ENCODE measurements at regions of chr1 and their contacts with region 1.

Region 1: DNA sequence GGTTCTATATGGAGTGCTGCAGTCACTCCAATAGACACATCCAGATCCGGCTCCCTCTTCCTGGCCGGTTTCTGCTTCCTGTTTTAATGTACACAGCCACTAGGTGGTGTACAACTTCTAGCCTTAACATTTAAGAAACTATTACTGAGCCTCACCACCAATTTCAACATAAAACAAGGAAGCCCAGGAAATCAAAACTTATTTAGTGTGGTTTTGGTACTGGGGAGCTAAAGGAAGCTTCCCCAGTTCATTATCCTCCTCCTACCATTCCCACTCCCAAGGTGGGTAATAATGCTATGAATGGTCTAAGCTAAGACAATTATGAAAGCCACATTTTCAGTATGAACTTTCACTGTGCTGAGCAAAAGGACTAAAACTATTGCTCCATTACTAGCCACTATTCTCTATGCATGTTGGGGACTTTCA is 25.5 kb upstream of the MTMR11 start:
- DNase-seq: peak; percentile 51 to 53
- H3K4me3 ChIP-seq: no peak overlapping the region
- H3K27ac ChIP-seq: peak overlapping the region in 2 of 3 donors; percentile 18 to 71
- H3K4me1 ChIP-seq: peaks cover 0 to 21% of the 10 kb centered on the region in 2 donors
- H3K27me3 ChIP-seq: no peaks in the 10 kb centered on the region
- CTCF ChIP-seq: peak; percentile 56 to 88 (median 78)
- POLR2A ChIP-seq: no peak

Region 2: GRCh38 chr1:150010393-150011115 is 48.4 kb after region 1 on chr1 and contains the start of gene OTUD7B:
- intact Hi-C with region 1: loop called (anchors 10 kb)
- DNase-seq: peak; percentile 90 to 91
- H3K4me3 ChIP-seq: peak within 1 kb of the TSS; percentile 7 to 93 (median 86)
- H3K27ac ChIP-seq: peak within 1 kb of the TSS; percentile 94 to 96 (median 95)
- H3K4me1 ChIP-seq: peaks cover 11 to 16% of the 10 kb centered on the region in 2 donors
- H3K27me3 ChIP-seq: no peaks in the 10 kb centered on the region
- CTCF ChIP-seq: peak in 1 of 6 experiments; percentile 17
- POLR2A ChIP-seq: peak in 1 of 2 donors; percentile 86
- total RNA-seq, gene OTUD7B: 15.9 to 39.2 (median 23.2) TPM

Region 3: DNA sequence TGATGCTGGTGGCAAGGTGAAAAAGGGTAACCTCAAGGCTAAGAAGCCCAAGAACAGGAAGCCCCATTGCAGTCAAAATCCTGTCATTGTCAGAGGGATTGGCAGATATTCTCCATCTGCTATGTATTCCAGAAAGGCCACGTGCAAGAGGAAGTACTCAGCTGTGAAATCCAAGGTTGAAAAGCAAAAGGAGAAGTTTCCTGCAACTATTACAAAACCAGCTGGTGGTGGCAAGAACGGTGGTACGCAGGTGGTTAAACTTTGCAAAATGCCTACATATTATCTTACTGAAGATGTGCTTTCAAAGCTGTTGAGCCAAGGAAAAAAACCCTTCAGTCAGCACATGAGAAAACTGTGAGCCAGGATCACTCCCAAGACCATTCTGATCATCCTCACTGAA is 91.8 kb after region 1 on chr1:
- intact Hi-C with region 1: loop called (anchors 5 kb)
- DNase-seq: no peak
- H3K4me3 ChIP-seq: no peak overlapping the region
- H3K27ac ChIP-seq: no peak overlapping the region
- H3K4me1 ChIP-seq: no peaks in the 10 kb centered on the region
- H3K27me3 ChIP-seq: no peaks in the 10 kb centered on the region
- CTCF ChIP-seq: no peak
- POLR2A ChIP-seq: no peak

Measured in thyroid gland (tissue), 4 donors.